ENCODE measurements at regions of chr14 and their contacts with region 1.

Region 1: DNA sequence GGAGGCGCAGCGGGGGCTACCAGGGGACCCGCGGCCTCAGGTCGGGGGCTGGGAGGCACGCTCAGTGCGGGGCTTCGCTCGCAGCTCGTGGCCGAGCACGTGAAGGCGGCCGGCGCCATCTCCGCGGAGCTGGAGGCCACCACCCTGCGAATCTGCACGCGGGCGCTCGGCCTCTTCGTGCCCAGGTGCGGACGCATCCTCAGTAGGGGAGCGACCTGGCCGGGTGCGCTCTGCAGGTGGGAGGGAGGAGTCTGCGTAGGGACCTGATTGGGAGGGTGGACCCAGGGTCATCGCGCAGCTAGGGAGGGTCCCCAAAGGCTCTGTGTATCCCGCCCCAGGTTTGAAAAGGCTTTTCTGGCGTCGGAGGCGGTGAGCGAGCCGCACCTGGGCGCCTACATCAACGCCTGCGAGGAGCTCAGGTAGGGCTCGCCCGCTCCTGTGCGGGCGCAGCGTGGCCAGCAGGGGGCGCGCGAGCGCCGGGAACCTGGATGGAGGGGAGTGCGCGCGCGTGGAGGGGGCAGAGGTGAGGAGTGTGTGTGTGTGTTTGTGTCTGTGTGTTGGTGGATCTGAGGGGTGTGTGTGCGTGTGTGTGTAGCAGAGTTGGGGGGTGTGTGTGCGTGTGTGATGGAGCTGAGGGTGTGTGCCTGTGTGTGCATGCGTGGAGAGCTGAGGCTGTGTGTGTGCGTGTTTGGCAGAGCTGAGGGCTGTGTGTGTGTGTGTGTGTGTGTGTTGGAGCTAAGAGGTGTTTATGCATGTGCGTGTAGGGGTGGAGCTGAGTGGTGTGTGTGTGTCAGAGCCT is 10.3 kb downstream of the EXOC3L4 start:
- H3K4me3 ChIP-seq: no peak overlapping the region
- H3K27ac ChIP-seq: no peak overlapping the region
- H3K4me1 ChIP-seq: no peaks in the 10 kb centered on the region
- CTCF ChIP-seq: peak; percentile 100

Region 2: GRCh38 chr14:102986810-102987579 is 117.9 kb before region 1 on chr14:
- CTCF ChIA-PET with region 1: no interaction called
- POLR2A ChIA-PET with region 1: no interaction called
- H3K4me3 ChIP-seq: no peak overlapping the region
- H3K27ac ChIP-seq: no peak overlapping the region
- H3K4me1 ChIP-seq: no peaks in the 10 kb centered on the region
- CTCF ChIP-seq: no peak

Region 3: GRCh38 chr14:103094406-103095209 is 10.2 kb before region 1 on chr14 and contains the start of gene EXOC3L4:
- CTCF ChIA-PET with region 1: interaction called, 44 read pairs
- POLR2A ChIA-PET with region 1: no interaction called
- H3K4me3 ChIP-seq: no peak within 1 kb of the TSS
- H3K27ac ChIP-seq: no peak within 1 kb of the TSS
- H3K4me1 ChIP-seq: peaks cover 2% of the 10 kb centered on the region; the same call in 1 of the 2 replicates
- CTCF ChIP-seq: no peak

Region 4: GRCh38 chr14:103130965-103131364 is 26.1 kb after region 1 on chr14:
- CTCF ChIA-PET with region 1: interaction called, 19 read pairs
- POLR2A ChIA-PET with region 1: no interaction called
- H3K4me3 ChIP-seq: no peak overlapping the region
- H3K27ac ChIP-seq: peak overlapping the region; percentile 34
- H3K4me1 ChIP-seq: peaks cover 8% of the 10 kb centered on the region; the same call in 1 of the 2 replicates
- CTCF ChIP-seq: no peak

Region 5: GRCh38 chr14:103169954-103170353 is 65.1 kb after region 1 on chr14:
- CTCF ChIA-PET with region 1: interaction called, 15 read pairs
- POLR2A ChIA-PET with region 1: no interaction called
- H3K4me3 ChIP-seq: no peak overlapping the region
- H3K27ac ChIP-seq: no peak overlapping the region
- H3K4me1 ChIP-seq: no peaks in the 10 kb centered on the region
- CTCF ChIP-seq: no peak

Region 6: GRCh38 chr14:103281496-103282231 is 176.8 kb after region 1 on chr14:
- CTCF ChIA-PET with region 1: interaction called, 11 read pairs
- POLR2A ChIA-PET with region 1: interaction called, 3 read pairs
- H3K4me3 ChIP-seq: no peak overlapping the region
- H3K27ac ChIP-seq: no peak overlapping the region
- H3K4me1 ChIP-seq: no peaks in the 10 kb centered on the region
- CTCF ChIP-seq: 0 out of 2 replicates have a peak, but pooled peaks have one; percentile 38

Region 7: GRCh38 chr14:103298620-103299019 is 193.8 kb after region 1 on chr14:
- CTCF ChIA-PET with region 1: interaction called, 74 read pairs
- POLR2A ChIA-PET with region 1: no interaction called
- H3K4me3 ChIP-seq: no peak overlapping the region
- H3K27ac ChIP-seq: no peak overlapping the region
- H3K4me1 ChIP-seq: no peaks in the 10 kb centered on the region
- CTCF ChIP-seq: peak; percentile 40; the same call in 1 of the 2 replicates